Activated B cell treated with CpG ODN at 0.5 μM for 24 hours (primary cell): ENCODE measurements at regions of chr1 and their contacts with region 1.

Region 1: GRCh38 chr1:177898003-177898654 is 71.7 kb downstream of the SEC16B start:
- DNase-seq: no peak
- ATAC-seq: no peak
- H3K4me3 Mint-ChIP-seq: no peak overlapping the region
- H3K27ac Mint-ChIP-seq: no peak overlapping the region
- H3K4me1 Mint-ChIP-seq: no peaks in the 10 kb centered on the region
- H3K27me3 Mint-ChIP-seq: peaks cover 2% of the 10 kb centered on the region
- CTCF ChIP-seq: no peak

Region 2: GRCh38 chr1:177629526-177629925 is 268.6 kb before region 1 on chr1:
- CTCF ChIA-PET with region 1: no interaction called
- POLR2A ChIA-PET with region 1: no interaction called
- intact Hi-C with region 1: no loop called
- DNase-seq: no peak
- ATAC-seq: no peak
- H3K4me3 Mint-ChIP-seq: no peak overlapping the region
- H3K27ac Mint-ChIP-seq: no peak overlapping the region
- H3K4me1 Mint-ChIP-seq: no peaks in the 10 kb centered on the region
- H3K27me3 Mint-ChIP-seq: no peaks in the 10 kb centered on the region
- CTCF ChIP-seq: no peak

Region 3: DNA sequence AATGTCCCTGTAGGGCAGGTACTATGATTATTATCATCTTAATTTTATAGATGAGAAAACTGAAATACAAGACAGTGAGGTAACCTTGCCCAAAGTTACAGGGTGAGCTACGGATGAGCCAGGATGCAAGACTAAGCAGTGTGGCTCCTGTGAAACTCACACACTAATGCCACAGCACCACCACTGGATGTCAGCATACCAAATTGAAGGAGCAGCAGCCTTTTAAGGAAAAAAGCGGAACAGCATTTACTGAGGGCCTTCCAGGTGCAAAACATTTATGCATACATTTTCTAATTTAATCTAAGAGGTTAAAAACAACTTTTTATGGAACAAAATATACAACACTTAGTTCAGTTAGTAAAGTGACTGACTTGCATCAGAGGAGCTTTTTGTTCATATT is 30.1 kb after region 1 on chr1:
- CTCF ChIA-PET with region 1: no interaction called
- POLR2A ChIA-PET with region 1: no interaction called
- intact Hi-C with region 1: no loop called
- DNase-seq: no peak
- ATAC-seq: no peak
- H3K4me3 Mint-ChIP-seq: no peak overlapping the region
- H3K27ac Mint-ChIP-seq: no peak overlapping the region
- H3K4me1 Mint-ChIP-seq: no peaks in the 10 kb centered on the region
- H3K27me3 Mint-ChIP-seq: no peaks in the 10 kb centered on the region
- CTCF ChIP-seq: no peak

Region 4: GRCh38 chr1:177953549-177953948 is 55.4 kb after region 1 on chr1:
- CTCF ChIA-PET with region 1: no interaction called
- POLR2A ChIA-PET with region 1: no interaction called
- intact Hi-C with region 1: loop called (anchors 2 kb)
- DNase-seq: no peak
- ATAC-seq: no peak
- H3K4me3 Mint-ChIP-seq: no peak overlapping the region
- H3K27ac Mint-ChIP-seq: no peak overlapping the region
- H3K4me1 Mint-ChIP-seq: no peaks in the 10 kb centered on the region
- H3K27me3 Mint-ChIP-seq: peaks cover 8% of the 10 kb centered on the region
- CTCF ChIP-seq: no peak